ENCODE measurements at regions of chr21 and their contacts with region 1.

Region 1: GRCh38 chr21:32770871-32771523 is 558 bp downstream of the PAXBP1 start:
- DNase-seq: no peak
- H3K4me3 ChIP-seq: peak overlapping the region; percentile 86
- CTCF ChIP-seq: no peak

Region 2: DNA sequence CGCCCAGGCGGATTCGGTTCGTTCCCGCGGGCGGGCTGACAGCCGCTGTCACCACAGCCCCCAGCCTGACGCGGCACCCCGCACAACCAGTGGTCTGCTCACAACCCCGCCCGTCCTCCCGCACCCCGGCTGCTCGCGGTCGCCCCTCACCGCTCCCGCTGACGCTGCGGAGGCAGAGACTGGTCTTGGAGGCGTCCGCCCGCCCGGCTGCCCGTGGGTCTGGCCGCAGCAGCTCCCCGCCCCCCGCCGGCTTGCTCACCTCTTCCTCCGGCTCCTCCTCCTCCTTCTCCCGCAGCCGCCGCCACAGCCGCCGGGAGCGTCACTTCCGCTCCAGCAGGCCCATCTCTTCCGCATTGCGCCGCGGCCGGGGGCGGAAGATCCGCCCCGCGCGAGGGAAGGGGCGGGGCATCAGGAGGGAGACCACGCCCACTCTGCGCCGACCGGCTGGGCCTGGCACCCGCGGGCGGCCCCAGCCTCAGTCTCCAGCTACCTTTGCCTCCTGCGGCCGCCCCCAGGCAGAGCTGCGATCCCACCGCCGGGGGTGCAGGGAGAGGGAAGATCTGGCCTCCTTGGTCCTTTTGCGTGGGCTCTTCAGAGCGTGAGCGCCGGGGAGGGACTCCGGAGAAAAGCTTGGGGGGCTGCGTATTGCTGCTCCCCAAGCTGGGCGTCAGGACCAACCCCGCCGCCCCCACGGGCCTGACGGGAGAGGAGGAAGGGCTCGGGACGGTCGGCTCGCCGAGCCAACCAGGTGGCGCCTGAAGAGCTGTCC is 43.1 kb before region 1 on chr21 and contains the start of gene SYNJ1:
- CTCF ChIA-PET with region 1: interaction called, 3 read pairs
- POLR2A ChIA-PET with region 1: interaction called, 15 read pairs
- DNase-seq: peak; percentile 53
- H3K4me3 ChIP-seq: peak within 1 kb of the TSS; percentile 93
- CTCF ChIP-seq: no peak

Region 3: GRCh38 chr21:32782698-32783097 is 11.7 kb after region 1 on chr21:
- CTCF ChIA-PET with region 1: interaction called, 26 read pairs
- POLR2A ChIA-PET with region 1: no interaction called
- DNase-seq: no peak
- H3K4me3 ChIP-seq: no peak overlapping the region
- CTCF ChIP-seq: no peak

Region 4: DNA sequence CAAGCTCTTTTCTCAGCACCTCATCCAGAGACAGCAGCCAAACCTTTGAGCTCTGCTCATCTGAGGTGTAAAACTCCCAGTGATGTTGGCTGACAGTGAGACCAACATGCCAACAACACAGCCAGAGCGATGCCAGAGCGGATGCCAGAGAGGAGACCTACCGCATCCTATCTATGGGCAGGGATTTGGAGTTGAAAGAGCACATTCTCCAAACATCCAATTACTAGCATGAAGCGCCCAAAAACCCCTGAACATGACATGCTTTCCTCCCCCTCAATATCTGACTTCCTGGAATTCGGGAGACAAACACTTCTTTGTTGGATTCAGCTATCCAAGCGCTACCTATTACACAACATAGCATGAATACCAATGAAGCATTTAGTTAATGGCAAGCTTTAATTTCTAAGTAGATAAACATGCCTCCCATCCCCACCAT is 23.7 kb after region 1 on chr21:
- CTCF ChIA-PET with region 1: interaction called, 10 read pairs
- POLR2A ChIA-PET with region 1: no interaction called
- DNase-seq: no peak
- H3K4me3 ChIP-seq: no peak overlapping the region
- CTCF ChIP-seq: no peak

Region 5: DNA sequence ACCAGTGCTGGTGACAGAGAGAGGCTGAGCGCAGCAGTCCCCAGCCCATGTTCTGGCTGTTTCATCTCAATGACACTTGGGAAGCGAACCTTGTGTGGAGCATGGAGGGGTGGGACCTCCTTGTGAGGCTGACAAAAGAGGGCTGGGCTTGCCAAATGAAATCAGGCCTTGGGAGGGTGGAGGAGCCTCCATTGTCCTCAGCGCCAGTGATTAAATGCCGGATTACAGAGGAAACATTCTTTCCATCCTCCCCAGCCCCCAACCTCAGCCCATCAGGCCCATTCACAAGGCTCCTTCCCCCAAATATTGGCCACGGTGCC is 63.9 kb after region 1 on chr21:
- CTCF ChIA-PET with region 1: interaction called, 13 read pairs
- POLR2A ChIA-PET with region 1: no interaction called
- DNase-seq: no peak
- H3K4me3 ChIP-seq: no peak overlapping the region
- CTCF ChIP-seq: no peak

Region 6: DNA sequence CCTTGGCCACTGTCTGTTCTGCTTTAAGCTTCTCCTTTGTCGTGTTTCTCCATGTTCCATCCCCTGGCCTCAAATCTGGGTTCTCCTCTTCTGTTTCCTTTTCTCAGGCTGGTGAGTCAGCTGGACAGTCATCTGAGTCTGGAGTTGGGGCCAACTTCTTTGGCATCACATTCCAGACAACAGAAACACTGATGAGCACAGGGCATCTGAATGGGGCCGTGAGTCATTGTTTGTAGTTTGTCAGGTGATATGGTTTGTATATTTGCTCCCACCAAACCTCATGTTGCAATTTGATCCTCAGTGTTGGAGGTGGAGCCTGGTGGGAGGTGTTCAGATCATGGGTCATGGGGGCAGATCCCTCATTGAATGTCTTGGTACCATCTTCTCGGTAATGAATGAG is 240.5 kb after region 1 on chr21:
- CTCF ChIA-PET with region 1: no interaction called
- POLR2A ChIA-PET with region 1: no interaction called
- DNase-seq: peak; percentile 56
- H3K4me3 ChIP-seq: no peak overlapping the region
- CTCF ChIP-seq: no peak